MCF 10A (cell line): ENCODE measurements at regions of chr12 and their contacts with region 1.

Region 1: DNA sequence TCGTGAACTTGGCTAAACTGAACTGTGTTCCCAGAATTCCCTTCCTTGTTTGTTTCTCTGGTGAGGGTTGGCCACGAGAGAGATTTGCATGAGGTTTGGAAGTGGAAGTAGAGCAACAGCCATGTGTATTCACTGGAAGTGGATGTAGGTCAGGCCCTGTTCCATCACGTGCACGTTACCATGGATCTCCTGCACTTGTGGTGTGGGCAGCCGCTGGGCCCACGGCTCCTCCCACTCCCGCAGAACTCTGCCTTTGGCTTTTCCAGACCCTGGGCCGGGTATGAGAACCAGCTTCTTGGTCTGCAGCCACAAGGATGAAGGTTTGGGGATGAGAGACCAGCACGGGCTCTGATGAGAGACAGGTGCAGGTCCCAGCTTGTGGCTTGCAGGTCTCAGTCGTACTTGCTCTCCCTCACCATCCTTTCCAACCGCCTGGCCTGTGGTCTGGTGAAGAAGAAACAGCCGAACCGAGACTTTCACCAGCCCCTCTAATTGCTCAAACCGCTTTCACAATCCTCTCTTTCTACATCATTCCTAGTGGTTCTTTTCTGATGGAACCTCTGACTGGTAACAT is 94.9 kb downstream of the DUSP16 start:
- DNase-seq: no peak
- H3K4me3 Mint-ChIP-seq: no peak overlapping the region
- H3K27ac Mint-ChIP-seq: no peak overlapping the region
- H3K4me1 Mint-ChIP-seq: peaks cover 17% of the 10 kb centered on the region
- H3K27me3 Mint-ChIP-seq: no peaks in the 10 kb centered on the region
- CTCF ChIP-seq: no peak

Region 2: DNA sequence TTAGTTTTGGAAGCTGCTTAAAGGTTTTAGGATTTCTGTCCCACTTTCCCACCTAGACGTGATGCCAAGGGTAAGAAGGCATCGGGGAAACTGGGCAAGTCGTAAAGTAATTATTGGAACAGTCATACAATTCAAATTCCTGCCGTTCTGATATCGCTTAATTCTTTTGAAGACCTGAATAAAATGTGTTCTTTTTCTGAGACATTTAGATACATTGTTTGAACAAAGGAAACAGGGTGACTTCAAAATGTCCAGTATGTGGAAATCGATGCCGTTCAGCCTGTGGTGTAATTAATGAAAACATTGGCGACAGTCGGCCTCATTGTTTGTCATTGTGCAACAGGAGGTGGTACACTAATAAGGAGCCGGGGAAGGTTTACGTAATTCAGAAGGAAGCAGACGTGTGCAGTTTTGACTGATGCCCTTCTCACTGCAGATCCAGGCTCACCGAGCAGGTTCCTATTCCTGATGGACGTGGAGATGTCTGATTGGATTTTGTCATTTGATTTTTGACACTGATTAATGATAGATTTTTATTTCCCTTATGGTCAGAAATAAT is 18.2 kb before region 1 on chr12:
- CTCF ChIA-PET with region 1: interaction called, 6 read pairs
- POLR2A ChIA-PET with region 1: interaction called, 18 read pairs
- intact Hi-C with region 1: no loop called
- DNase-seq: peak; percentile 93
- H3K4me3 Mint-ChIP-seq: no peak overlapping the region
- H3K27ac Mint-ChIP-seq: peak overlapping the region; percentile 28
- H3K4me1 Mint-ChIP-seq: peaks cover 26% of the 10 kb centered on the region
- H3K27me3 Mint-ChIP-seq: no peaks in the 10 kb centered on the region
- CTCF ChIP-seq: no peak

Region 3: DNA sequence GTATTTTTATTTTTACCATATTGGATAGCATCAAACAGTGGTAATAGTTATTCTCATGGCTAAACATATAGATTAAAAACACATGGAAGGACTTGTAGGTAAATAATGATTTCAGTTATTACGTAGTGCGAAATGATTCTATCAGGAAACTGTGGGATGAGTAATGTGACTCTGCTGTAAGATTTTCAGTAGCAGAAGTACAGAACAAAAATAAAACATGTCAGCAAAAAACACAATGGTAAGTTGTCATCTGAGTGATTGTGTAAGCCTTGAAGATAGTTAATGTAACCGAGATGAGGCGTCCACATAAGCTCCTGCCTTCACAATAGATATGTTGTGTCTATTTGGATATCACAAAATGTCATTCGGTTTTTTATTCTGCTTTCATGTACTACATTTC is 11.1 kb before region 1 on chr12:
- CTCF ChIA-PET with region 1: interaction called, 7 read pairs
- POLR2A ChIA-PET with region 1: interaction called, 19 read pairs
- intact Hi-C with region 1: no loop called
- DNase-seq: peak; percentile 48
- H3K4me3 Mint-ChIP-seq: no peak overlapping the region
- H3K27ac Mint-ChIP-seq: peak overlapping the region; percentile 16
- H3K4me1 Mint-ChIP-seq: no peaks in the 10 kb centered on the region
- H3K27me3 Mint-ChIP-seq: no peaks in the 10 kb centered on the region
- CTCF ChIP-seq: no peak

Region 4: GRCh38 chr12:12502815-12503151 is 35.0 kb after region 1 on chr12:
- CTCF ChIA-PET with region 1: no interaction called
- POLR2A ChIA-PET with region 1: no interaction called
- intact Hi-C with region 1: no loop called
- DNase-seq: no peak
- H3K4me3 Mint-ChIP-seq: no peak overlapping the region
- H3K27ac Mint-ChIP-seq: no peak overlapping the region
- H3K4me1 Mint-ChIP-seq: peaks cover 9% of the 10 kb centered on the region
- H3K27me3 Mint-ChIP-seq: no peaks in the 10 kb centered on the region
- CTCF ChIP-seq: no peak